Left colon (tissue), 2 donors: ENCODE measurements at regions of chr3 and their contacts with region 1.

Region 1: DNA sequence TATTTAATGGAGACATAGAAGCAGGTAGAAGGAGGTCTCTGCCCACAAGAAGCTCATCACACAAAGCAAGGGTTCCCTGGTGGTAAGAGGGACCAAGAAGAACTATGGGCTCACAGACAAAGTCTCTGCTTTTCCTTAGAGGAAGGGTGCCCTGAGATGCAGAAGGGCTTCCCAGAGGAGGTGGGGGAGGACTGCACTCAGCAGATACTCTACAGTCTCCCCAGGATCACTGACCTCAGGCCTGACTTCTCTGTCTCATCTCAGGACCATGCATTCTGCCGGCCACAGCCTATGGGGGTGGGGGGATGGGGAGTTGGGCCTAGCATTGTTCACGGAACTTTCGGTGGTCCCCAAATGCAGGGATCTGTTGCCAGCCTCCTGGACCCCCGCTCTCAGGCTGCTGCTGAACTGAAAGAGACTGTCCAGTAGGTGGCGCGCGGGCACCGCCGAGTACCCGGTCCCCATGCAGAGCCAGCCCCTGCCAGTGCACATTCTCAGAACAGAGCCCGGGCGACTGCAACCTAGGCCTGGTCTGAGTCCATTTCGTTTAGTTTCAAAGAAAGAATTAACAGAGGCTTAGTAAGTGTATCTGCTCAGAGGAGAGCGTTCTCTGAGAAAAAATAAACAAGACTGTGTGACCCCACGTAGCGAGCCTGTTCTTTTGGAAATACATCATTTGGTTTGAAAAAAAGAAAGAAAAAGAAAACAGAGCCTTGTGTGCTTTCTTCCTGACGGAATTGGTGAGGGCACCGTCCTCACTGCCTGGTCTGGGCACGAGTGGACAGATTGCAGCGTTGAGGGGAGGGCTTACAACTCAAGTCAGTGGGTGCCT is 74.1 kb downstream of the LRTM1 start:
- DNase-seq: peak; percentile 49 to 75
- ATAC-seq: peak; percentile 81

Region 2: DNA sequence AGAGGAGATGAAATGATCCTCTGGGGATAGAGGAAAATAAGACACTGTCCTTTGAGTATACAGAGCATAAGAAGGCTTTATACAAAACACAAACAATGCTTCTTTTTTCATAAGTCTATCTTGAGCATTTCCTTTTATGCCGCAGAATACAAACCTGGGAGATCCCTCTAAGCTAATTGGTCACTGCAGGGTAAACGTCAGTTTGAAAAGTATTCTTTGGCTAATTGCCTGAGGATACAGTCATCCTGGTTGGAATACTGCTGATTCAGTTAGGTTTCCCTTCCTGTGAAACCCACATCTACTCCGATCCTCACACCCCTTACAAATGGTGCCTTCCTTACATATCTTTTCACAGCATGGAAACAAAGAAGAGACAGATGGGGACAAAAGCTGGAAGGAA is 622.7 kb after region 1 on chr3:
- intact Hi-C with region 1: loop called in 1 of 2 experiments (anchors 10 kb)
- DNase-seq: no peak
- ATAC-seq: no peak

Region 3: DNA sequence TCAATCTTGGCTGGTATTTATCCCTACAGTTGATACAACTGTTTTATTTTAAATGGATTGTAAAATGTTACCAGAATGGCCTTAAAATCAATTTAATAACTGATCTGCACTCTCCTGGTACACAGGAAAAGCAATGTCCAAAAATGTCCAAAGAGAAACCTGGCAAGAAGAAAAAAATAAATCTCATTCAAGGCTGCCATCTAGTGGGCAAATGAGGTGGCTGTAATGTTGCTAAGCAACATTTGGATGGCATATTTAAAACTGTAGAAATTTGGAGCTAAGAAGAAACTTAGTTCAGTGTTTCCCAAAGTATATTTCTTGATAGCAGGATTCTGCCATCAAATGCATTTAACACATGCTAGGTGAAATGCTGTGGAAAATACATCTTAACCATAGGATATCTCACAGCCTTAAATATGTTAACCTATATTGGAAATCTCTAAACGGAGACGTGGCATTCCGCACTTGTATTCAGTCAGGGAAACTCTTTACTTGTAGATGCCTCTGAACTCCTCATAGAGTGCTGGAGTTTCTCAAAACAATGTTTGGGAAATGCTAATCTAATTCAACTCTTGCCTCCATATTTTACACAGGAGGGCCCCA is 1397.7 kb after region 1 on chr3:
- intact Hi-C with region 1: loop called in 1 of 2 experiments (anchors 10 kb)
- DNase-seq: peak in 1 of 2 donors; percentile 21
- ATAC-seq: no peak